Endothelial cell of umbilical vein (primary cell): ENCODE measurements at regions of chr1 and their contacts with region 1.

Region 1: GRCh38 chr1:40531381-40532061 is at the start of gene ZNF684:
- DNase-seq: peak; percentile 92
- H3K4me3 ChIP-seq: peak within 1 kb of the TSS; percentile 59 to 84 (median 82)
- H3K27ac ChIP-seq: peak within 1 kb of the TSS; percentile 96
- H3K4me1 ChIP-seq: peaks cover 7% of the 10 kb centered on the region
- H3K27me3 ChIP-seq: peaks cover 0 to 2% of the 10 kb centered on the region in 2 experiments
- CTCF ChIP-seq: no peak
- POLR2A ChIP-seq: no peak
- total RNA-seq, gene ZNF684: 5.5 and 5.8 TPM in 2 replicates

Region 2: GRCh38 chr1:40449684-40450494 is 81.6 kb before region 1 on chr1 and contains the start of gene ZFP69B:
- CTCF ChIA-PET with region 1: interaction called, 9 read pairs
- POLR2A ChIA-PET with region 1: no interaction called
- dilution Hi-C with region 1: no loop called
- intact Hi-C with region 1: loop called (anchors 5 kb)
- DNase-seq: peak; percentile 94
- H3K4me3 ChIP-seq: peak within 1 kb of the TSS; percentile 30 to 84 (median 54)
- H3K27ac ChIP-seq: peak within 1 kb of the TSS; percentile 63
- H3K4me1 ChIP-seq: peaks cover 10% of the 10 kb centered on the region
- H3K27me3 ChIP-seq: no peaks in the 10 kb centered on the region
- CTCF ChIP-seq: peak in 1 of 2 donors; percentile 33
- POLR2A ChIP-seq: peak; percentile 64
- total RNA-seq, gene ZFP69B: 2.7 and 3.4 TPM in 2 replicates

Region 3: DNA sequence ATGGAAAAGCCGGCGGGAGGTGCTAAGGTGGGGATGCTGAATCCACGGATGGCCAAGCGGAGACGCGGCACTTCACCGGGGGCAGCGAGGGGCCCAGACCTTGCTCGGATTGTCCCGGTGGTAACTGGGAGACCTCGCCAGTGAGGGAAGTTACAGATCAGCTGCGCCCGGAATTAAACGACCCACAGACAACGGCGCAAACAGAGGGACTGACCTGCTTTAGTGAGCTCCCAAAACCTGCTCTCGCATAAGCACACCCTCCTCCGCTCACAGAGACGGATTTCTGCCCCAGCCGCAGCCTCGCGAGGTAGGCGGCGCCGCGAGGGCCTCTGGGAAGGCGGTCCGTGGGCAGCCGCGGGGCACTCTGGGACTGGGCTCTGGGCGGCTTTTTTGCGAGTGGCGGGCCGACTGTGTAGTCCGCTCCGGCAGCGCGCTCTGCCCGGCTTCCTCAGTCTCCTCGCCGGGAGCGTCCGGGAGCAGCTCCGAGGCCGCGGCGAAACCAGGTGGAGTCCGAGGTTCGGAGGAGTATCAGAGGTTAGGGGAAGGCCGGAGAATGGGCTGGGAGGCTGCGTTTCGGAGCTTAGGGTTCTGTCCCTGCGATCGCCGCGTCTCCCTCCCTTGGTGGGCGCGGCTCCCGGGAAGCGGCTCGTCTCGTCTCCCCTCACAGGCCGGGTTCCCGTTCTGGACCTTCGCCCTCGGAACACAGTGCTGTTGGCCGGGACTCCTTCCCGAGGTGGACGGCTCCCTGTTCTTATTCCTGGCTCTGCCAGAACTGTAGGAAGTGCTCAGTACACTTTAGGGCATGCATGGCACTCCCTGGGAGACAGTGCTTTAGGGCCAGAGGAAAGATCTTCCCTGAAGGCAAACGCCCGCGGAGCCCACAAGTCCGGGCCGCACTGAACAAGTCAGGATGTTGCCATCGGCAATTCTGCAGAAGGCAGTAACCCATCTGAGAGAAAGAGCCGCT is 22.9 kb before region 1 on chr1 and contains the start of gene EXO5:
- CTCF ChIA-PET with region 1: interaction called, 13 read pairs
- POLR2A ChIA-PET with region 1: no interaction called
- dilution Hi-C with region 1: no loop called
- intact Hi-C with region 1: no loop called
- DNase-seq: peak; percentile 82
- H3K4me3 ChIP-seq: peak within 1 kb of the TSS; percentile 61 to 79 (median 78)
- H3K27ac ChIP-seq: peak within 1 kb of the TSS; percentile 13
- H3K4me1 ChIP-seq: peaks cover 9% of the 10 kb centered on the region
- H3K27me3 ChIP-seq: no peaks in the 10 kb centered on the region
- CTCF ChIP-seq: no peak
- POLR2A ChIP-seq: peak; percentile 91
- total RNA-seq, gene EXO5: 9.2 and 13.0 TPM in 2 replicates

Region 4: DNA sequence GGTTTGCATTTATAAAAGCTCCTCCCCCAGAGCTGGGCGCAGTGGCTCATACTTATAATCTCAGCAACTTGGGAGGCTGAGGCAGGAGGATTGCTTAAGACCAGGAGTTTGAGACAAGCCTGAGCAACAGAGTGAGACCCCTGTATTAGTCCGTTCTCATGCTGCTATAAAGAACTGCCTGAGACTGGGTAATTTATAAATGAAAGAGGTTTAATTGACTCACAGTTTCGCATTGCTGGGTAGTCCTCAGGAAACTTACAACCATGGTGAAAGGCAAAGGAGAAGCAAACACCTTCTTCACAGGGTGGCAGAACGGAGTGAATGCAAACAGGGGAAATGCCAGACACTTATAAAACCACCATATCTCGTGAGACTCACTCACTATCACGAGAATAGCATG is 52.5 kb after region 1 on chr1:
- CTCF ChIA-PET with region 1: interaction called, 11 read pairs
- POLR2A ChIA-PET with region 1: interaction called, 3 read pairs
- dilution Hi-C with region 1: no loop called
- intact Hi-C with region 1: no loop called
- DNase-seq: no peak
- H3K4me3 ChIP-seq: no peak overlapping the region
- H3K27ac ChIP-seq: no peak overlapping the region
- H3K4me1 ChIP-seq: no peaks in the 10 kb centered on the region
- H3K27me3 ChIP-seq: peaks cover 3 to 4% of the 10 kb centered on the region in 2 experiments
- CTCF ChIP-seq: no peak
- POLR2A ChIP-seq: no peak

Region 5: DNA sequence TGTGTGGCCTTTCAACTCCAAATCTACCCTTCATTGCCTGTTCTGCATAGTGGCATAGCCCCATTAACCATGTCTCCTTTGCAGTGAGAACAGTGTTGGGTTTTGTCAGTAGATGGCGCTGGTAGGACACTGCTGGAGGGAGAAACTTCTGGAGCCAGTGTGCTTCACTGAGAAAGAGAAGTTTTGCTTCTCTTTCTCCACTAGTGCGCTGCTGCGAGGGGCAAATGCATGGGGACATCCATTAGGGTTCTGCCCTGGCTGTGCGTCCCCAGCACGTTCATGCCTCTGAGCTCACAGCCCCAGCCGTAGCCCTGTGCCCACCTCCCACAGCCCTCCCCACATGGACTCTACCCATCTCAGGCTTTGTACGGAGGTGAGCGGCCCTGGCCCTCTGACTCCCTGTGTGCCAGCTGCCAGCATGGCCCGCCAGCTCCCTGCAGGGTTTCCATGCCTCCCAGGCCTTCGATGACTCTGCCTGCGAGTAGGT is 80.9 kb after region 1 on chr1:
- CTCF ChIA-PET with region 1: interaction called, 15 read pairs
- POLR2A ChIA-PET with region 1: no interaction called
- dilution Hi-C with region 1: no loop called
- intact Hi-C with region 1: no loop called
- DNase-seq: peak; percentile 71
- H3K4me3 ChIP-seq: no peak overlapping the region
- H3K27ac ChIP-seq: no peak overlapping the region
- H3K4me1 ChIP-seq: no peaks in the 10 kb centered on the region
- H3K27me3 ChIP-seq: peaks cover 1 to 11% of the 10 kb centered on the region in 2 experiments
- CTCF ChIP-seq: peak; percentile 75 to 81
- POLR2A ChIP-seq: no peak

Region 6: DNA sequence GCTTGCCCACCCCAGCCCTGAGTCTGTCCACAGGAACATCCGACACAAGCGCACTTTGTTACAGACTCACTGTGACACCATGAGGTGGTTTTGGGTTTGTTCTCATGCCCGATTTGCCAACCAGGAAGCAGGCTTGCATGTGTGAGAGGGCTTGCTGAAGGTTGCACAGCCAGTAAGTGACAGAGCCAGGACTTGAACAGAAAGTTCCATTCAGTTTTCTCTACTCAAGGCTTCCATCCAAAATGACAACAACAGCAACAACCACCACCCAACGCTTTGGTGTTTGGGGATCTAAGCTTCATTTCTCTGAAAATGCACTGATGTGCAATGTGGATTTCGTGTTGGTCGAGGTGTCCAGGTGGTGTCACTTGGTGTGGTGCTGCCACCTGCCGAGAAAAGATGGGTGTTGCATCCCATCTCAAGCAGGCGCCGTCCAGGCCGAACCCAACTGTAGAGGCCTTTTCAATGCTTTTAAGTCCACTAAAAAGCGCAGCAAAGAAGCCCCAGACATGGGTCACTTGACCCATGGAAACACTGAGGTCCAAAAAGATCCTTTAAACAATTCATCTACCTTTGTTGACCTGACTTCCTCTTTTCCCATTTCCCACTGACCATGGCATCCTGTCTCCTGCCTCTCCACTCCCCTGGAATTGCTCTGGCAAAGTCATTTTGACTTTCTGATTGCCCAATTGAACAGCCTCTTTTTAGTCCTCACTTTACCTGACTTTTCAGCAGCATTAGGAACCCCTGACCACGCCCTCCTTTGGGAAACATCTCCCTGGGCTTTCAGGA is 318.5 kb after region 1 on chr1:
- CTCF ChIA-PET with region 1: interaction called, 4 read pairs
- POLR2A ChIA-PET with region 1: no interaction called
- dilution Hi-C with region 1: no loop called
- intact Hi-C with region 1: loop called (anchors 2 kb)
- DNase-seq: peak; percentile 60
- H3K4me3 ChIP-seq: no peak overlapping the region
- H3K27ac ChIP-seq: no peak overlapping the region
- H3K4me1 ChIP-seq: peaks cover 3% of the 10 kb centered on the region
- H3K27me3 ChIP-seq: peaks cover 14 to 17% of the 10 kb centered on the region in 2 experiments
- CTCF ChIP-seq: peak; percentile 80 to 86
- POLR2A ChIP-seq: no peak